WTC11 (cell line): ENCODE measurements at regions of chr1 and their contacts with region 1.

Region 1: DNA sequence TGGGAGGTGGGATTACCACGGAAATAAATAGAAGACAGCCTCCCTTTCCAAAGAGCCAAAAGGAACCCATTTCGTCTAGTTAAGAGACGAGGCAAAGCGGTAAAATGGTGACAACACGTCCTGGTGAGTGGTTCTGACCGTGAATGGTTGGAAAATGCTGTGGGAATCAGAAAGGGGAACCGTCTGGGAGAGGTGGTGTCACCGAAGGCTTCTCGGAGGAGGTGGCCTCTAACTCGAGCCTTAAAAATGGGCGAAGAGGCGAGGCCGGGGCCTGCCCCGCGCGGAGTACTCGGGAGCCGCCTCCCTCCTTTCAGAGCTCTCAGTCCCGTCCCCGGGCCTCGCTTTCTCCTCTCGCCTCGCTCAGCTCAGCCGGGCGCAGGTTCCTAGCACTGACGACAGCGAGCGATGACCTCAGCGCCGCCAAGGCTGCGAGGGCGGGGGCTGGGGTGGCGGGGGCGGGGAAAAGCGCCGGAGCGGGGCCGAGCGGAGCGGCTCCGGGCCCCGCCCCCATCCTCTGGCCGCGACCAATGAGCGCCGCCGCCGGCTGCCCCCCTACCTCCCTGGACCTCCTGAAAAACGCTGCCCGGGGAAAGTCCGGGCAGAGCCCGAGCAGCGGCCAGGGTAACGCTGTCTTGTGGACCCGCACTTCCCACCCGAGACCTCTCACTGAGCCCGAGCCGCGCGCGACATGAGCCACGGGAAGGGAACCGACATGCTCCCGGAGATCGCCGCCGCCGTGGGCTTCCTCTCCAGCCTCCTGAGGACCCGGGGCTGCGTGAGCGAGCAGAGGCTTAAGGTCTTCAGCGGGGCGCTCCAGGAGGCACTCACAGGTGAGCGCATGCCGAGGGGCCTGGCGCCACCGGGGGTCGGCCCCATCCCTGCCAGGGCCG is at the start of gene BTG2:
- DNase-seq: peak; percentile 84
- ATAC-seq: peak; percentile 80
- H3K4me3 Mint-ChIP-seq: peak within 1 kb of the TSS; percentile 79
- H3K27ac Mint-ChIP-seq: no peak within 1 kb of the TSS
- H3K4me1 Mint-ChIP-seq: peaks cover 55% of the 10 kb centered on the region
- H3K27me3 Mint-ChIP-seq: peaks cover 96% of the 10 kb centered on the region
- CTCF ChIP-seq: no peak
- total RNA-seq, gene BTG2: 13.5 to 19.4 TPM (median 15.4 TPM) in 3 replicates

Region 2: DNA sequence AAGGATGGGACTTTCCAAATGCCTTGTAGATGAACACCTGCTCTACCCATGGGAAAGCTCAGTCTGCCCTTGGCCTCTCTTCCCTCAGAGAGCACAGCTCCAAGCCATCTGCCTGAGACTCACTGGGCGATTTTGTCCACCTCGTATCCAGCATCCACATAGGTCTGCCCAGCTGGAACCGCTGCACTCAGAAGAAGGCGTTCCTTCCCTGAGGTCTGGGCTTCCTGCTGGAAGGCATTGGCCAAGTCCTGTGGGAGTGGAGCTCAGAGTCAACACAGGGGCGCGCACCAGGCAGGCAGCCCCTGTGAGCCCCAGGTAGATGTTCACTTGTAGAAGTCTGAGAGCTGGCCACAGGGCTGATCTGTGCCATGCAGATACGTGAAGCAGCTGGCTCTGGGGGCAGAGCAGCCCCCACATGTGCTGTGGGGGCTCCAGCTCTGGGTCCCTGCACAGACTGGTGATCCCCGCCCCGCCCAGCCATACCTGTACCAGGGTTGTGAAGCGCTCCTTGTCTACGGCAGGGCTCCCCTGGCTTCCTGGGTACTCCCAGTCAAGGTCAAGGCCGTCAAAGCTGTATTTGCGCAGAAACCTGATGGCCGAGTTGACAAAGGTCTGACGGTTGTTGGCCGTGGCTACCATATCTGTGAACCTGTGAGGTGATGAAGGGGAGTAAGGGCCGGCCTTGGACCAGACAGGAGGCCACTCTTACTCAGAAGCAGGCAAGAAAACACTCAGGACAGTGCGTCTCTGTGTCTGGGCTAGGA is 82.0 kb before region 1 on chr1:
- CTCF ChIA-PET with region 1: no interaction called
- POLR2A ChIA-PET with region 1: no interaction called
- DNase-seq: no peak
- ATAC-seq: no peak
- H3K4me3 Mint-ChIP-seq: no peak overlapping the region
- H3K27ac Mint-ChIP-seq: no peak overlapping the region
- H3K4me1 Mint-ChIP-seq: no peaks in the 10 kb centered on the region
- H3K27me3 Mint-ChIP-seq: peaks cover 3% of the 10 kb centered on the region; the same call in 1 of the 2 replicates
- CTCF ChIP-seq: no peak

Region 3: GRCh38 chr1:203290261-203291089 is 14.7 kb before region 1 on chr1:
- CTCF ChIA-PET with region 1: interaction called, 16 read pairs
- POLR2A ChIA-PET with region 1: interaction called, 17 read pairs
- DNase-seq: peak; percentile 93
- ATAC-seq: peak; percentile 83
- H3K4me3 Mint-ChIP-seq: peak overlapping the region; percentile 63
- H3K27ac Mint-ChIP-seq: peak overlapping the region; percentile 97
- H3K4me1 Mint-ChIP-seq: peaks cover 55% of the 10 kb centered on the region
- H3K27me3 Mint-ChIP-seq: peaks cover 64% of the 10 kb centered on the region
- CTCF ChIP-seq: no peak

Region 4: GRCh38 chr1:203320591-203321272 is 15.6 kb after region 1 on chr1:
- CTCF ChIA-PET with region 1: interaction called, 45 read pairs
- POLR2A ChIA-PET with region 1: interaction called, 37 read pairs
- DNase-seq: peak; percentile 63
- ATAC-seq: peak; percentile 97
- H3K4me3 Mint-ChIP-seq: no peak overlapping the region
- H3K27ac Mint-ChIP-seq: no peak overlapping the region
- H3K4me1 Mint-ChIP-seq: peaks cover 36% of the 10 kb centered on the region
- H3K27me3 Mint-ChIP-seq: peaks cover 96% of the 10 kb centered on the region
- CTCF ChIP-seq: no peak

Region 5: DNA sequence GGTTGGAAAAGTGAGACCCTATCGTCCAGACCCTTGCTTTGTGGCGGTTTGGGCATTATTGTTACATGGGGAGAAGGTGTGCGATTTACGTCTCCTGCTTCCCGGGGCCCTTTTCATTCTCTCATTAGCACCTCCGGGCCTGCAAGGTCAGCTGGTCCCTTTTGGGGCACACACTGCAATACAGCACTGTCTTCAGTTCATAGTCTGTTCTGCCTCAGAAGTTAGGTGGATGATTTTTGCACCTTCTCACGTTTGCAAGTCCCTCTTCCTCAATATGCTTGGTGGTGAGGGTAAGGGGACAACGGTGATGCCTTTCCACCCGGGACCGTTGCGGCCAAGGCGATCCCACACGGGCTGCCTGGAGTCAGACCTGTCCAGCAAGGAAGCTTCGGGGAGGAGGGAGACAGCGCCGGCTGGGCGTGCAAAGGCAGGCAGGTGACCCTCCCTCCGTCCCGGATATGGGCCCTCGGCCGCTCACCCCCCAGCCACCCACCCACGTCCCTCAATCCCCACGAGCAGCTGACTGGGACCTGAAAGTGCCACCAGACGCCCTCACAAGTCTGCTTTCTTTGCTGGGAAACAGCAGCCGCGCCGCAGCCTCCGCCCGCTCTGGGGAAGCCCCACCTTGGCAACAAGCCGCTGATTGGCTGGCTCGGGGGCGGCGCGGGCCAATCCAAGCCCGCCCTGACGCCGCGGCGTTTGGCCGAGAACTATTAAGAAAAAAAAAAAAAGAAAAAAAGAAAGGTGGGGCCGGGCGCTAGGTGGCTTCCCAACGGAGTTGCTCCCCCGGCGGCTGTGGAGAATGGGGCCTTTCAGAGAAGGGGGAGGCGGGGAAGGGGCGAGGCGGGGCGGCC is 21.9 kb after region 1 on chr1:
- CTCF ChIA-PET with region 1: interaction called, 45 read pairs
- POLR2A ChIA-PET with region 1: interaction called, 37 read pairs
- DNase-seq: peak; percentile 91
- ATAC-seq: peak; percentile 85
- H3K4me3 Mint-ChIP-seq: peak overlapping the region; percentile 69
- H3K27ac Mint-ChIP-seq: no peak overlapping the region
- H3K4me1 Mint-ChIP-seq: peaks cover 50% of the 10 kb centered on the region
- H3K27me3 Mint-ChIP-seq: peaks cover 62% of the 10 kb centered on the region
- CTCF ChIP-seq: no peak